ENCODE measurements at regions of chr4 and their contacts with region 1.

Region 1: DNA sequence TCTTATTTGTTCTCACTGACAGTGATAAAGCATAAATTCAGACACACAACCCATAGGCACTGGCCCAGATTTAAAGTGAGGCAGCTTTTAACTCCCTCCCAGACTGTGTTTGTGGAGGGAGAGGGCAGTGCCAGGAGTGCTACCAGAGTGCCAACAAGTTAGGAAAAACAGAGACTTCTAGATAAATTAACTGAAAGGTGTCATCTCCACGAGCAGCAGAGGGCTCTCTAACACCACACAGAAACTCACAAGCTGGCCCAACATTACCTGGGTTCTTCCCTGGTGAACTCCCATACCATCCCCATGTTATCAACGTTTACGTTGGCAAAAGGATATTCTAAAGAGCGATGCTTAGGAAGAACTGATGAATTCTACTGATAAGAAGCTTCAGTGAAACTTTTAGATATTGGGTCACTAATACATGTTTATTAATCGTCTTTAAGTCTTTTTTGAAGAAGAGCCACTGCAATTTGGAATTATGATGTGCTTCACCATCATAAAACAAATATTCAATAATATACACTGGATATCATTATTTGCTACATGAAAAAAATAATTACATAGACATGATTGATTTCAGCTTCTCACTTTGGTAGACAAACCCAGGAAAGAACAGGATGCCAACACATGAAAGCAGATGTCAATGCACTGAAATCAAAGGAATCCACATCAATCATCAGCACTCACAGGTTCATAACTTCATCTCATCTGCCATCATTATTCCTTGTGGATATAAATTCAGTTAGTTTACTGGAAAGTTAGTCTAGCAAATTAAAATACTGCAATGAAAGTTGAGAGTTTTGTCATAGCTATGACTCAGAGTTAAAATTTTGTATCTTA is 121.2 kb upstream of the NAP1L5 start:
- DNase-seq: peak; percentile 56
- H3K4me3 Mint-ChIP-seq: peak overlapping the region; percentile 23
- H3K27ac Mint-ChIP-seq: peak overlapping the region; percentile 43
- H3K4me1 Mint-ChIP-seq: peaks cover 46% of the 10 kb centered on the region
- H3K27me3 Mint-ChIP-seq: peaks cover 7% of the 10 kb centered on the region

Region 2: GRCh38 chr4:89024051-89024675 is 205.3 kb after region 1 on chr4:
- CTCF ChIA-PET with region 1: interaction called, 32 read pairs
- POLR2A ChIA-PET with region 1: no interaction called
- DNase-seq: peak; percentile 77
- H3K4me3 Mint-ChIP-seq: no peak overlapping the region
- H3K27ac Mint-ChIP-seq: no peak overlapping the region
- H3K4me1 Mint-ChIP-seq: peaks cover 3% of the 10 kb centered on the region
- H3K27me3 Mint-ChIP-seq: peaks cover 2% of the 10 kb centered on the region